ENCODE measurements at regions of chr18 and their contacts with region 1.

Region 1: GRCh38 chr18:623761-624620 is 27.2 kb downstream of the CLUL1 start:
- DNase-seq: no peak

Region 2: GRCh38 chr18:519019-519879 is 104.7 kb before region 1 on chr18:
- intact Hi-C with region 1: no loop called
- DNase-seq: no peak

Region 3: GRCh38 chr18:839224-840022 is 215.4 kb after region 1 on chr18:
- intact Hi-C with region 1: loop called (anchors 2 kb)
- DNase-seq: peak; percentile 88